ENCODE measurements at regions of chr12 and their contacts with region 1.

Region 1: DNA sequence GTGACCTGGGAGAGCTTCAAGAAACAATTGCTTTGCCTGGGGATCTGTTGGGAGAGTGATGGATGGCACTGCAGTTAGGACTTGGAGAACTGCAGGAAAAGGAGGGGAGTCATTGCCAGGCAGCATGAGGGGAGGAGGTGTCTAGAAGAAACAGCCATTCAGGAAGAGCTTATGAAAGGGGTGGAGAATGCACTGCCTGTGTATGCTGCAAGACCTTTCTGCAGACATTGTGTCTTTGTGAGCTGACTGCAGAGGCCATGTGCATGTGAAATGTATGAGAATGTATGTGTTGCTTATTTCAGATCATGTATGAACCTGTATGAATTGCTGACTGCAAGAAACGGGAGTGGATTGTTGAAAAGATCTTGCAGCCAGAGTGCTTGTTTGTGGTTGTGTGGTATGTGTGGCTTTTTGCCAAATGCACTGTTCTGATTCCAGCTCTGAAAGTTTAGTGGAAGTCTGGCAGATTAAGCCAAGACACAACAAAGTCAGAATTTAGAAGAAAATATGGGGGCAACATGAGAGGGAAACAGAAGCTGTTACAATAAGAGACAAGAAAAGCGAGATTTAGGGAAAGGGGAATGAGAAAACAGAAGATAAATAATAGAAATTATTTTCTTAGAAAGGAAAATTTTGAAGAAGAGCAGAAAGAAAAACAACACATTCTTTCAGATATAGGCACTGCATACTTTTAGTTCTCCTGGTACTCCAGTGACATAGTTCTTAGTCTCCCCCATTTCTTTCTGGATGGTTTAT is 9.8 kb upstream of the RIMKLB start:
- DNase-seq: peak in 1 of 2 donors; percentile 32
- ATAC-seq: peak in 3 of 4 donors; percentile 49 to 70 (median 67)
- H3K4me3 ChIP-seq: no peak overlapping the region
- H3K27ac ChIP-seq: no peak overlapping the region
- H3K4me1 ChIP-seq: peaks cover 10% of the 10 kb centered on the region
- H3K27me3 ChIP-seq: no peaks in the 10 kb centered on the region
- CTCF ChIP-seq: no peak

Region 2: DNA sequence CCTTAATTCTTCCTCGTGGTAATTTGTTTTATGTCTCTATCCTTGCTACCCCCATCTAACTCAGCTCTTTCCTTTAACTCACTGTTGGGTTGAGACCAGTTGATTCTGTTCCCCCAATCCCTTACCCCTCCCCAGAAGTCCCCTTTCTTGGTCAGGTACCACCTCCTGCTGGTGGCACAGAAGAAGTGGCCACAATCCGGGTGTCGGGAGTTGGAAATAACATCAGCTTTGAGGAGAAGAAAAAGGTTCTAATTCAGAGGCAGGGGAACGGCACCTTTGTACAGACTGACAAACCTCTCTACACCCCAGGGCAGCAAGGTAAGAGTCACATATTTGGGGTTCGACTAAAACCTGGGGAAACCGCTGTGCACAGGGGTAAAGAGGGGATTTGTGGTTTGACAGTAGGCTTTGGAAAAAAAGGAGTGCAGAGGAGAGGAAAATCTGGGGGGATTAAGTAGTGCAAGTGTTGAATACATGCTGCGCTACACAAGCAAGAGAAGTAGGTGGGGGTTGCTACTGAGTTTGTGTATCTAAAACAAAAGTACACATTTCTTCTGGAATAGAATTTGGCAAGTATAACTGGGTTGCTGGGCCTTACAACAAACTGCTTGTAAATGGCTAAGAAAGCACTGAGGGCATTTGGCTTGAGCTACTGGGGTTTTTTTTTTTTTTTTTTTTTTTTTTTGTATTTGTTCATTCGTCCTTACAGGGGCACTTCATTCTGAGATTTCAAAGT is 135.7 kb after region 1 on chr12:
- intact Hi-C with region 1: loop called in 1 of 2 experiments (anchors 10 kb)
- DNase-seq: no peak
- ATAC-seq: no peak
- H3K4me3 ChIP-seq: no peak overlapping the region
- H3K27ac ChIP-seq: no peak overlapping the region
- H3K4me1 ChIP-seq: no peaks in the 10 kb centered on the region
- H3K27me3 ChIP-seq: peaks cover 0 to 2% (median 0%) of the 10 kb centered on the region in 3 donors
- CTCF ChIP-seq: peak; percentile 49

Region 3: GRCh38 chr12:8876887-8877286 is 188.9 kb after region 1 on chr12:
- intact Hi-C with region 1: no loop called
- DNase-seq: no peak
- ATAC-seq: no peak
- H3K4me3 ChIP-seq: no peak overlapping the region
- H3K27ac ChIP-seq: no peak overlapping the region
- H3K4me1 ChIP-seq: no peaks in the 10 kb centered on the region
- H3K27me3 ChIP-seq: no peaks in the 10 kb centered on the region
- CTCF ChIP-seq: no peak

Region 4: DNA sequence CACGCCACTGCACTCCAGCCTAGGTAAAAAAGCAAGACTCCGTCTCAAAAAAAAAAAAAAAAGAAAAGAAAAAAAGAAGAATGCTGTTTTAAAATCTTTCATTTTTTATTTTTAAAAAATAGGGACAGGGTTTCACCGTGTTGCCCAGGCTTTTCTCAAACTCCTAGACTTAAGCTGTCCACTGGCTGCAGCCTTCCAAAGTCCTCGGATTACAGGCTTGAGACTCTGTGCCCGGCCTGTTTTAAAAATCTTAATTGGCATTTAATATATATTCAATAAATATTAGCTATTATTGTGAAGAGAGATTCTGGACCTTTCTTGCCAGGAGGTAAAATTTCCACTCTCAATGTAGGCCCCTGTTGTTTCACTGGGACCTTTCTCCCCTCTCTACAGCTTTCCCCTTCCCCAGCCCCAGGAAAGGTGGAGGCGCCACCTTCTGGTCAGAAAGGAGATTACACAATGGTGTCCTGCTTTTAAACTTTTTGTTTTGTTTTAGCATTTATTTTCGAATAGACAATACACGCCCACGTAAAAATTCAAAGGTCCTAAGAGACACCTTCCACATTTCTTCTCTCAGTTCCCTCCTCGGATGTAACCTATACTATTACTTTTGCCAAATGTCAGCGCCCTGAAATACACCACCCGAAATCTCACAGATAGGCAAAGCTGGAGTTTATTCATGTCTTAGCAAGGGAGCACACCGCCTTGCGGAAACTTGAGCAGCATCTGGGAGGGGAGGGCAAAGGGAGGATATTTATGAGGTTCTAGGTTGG is 202.5 kb after region 1 on chr12:
- intact Hi-C with region 1: loop called (anchors 2 kb)
- DNase-seq: peak in 1 of 2 donors; percentile 17
- ATAC-seq: peak; percentile 56 to 83 (median 64)
- H3K4me3 ChIP-seq: peak overlapping the region; percentile 64
- H3K27ac ChIP-seq: no peak overlapping the region
- H3K4me1 ChIP-seq: no peaks in the 10 kb centered on the region
- H3K27me3 ChIP-seq: no peaks in the 10 kb centered on the region
- CTCF ChIP-seq: peak; percentile 84